Common myeloid progenitor, CD34-positive (primary cell): ENCODE measurements at regions of chr16 and their contacts with region 1.

Region 1: GRCh38 chr16:3059000-3059722 is 6.3 kb upstream of the IL32 start:
- DNase-seq: peak; percentile 75 to 83 (median 78)
- H3K4me3 ChIP-seq: peak overlapping the region; percentile 64 to 90 (median 76)
- H3K27ac ChIP-seq: peak overlapping the region in 1 of 2 experiments; percentile 61
- H3K4me1 ChIP-seq: peaks cover 0 to 57% (median 48%) of the 10 kb centered on the region in 4 experiments
- H3K27me3 ChIP-seq: peaks cover 0 to 6% (median 0%) of the 10 kb centered on the region in 5 experiments

Region 2: DNA sequence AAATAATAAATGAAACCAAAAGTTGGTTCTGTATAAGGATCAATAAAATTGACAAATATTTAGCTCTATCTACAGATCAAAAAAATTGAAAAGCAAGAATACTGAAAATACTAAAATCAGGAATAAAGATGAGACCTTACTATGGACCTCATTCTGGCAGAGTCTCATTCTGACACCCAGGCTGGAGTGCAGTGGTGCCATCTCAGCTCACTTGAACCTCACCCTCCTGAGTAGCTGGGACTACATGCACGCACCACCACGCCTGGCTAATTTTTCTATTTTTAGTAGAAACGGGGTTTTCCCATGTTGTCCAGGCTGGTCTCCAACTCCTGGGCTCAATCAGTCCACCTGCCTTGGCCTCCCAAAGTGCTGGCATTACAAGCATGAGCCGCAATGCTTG is 117.1 kb before region 1 on chr16:
- CTCF ChIA-PET with region 1: no interaction called
- POLR2A ChIA-PET with region 1: no interaction called
- DNase-seq: no peak
- H3K4me3 ChIP-seq: no peak overlapping the region
- H3K27ac ChIP-seq: no peak overlapping the region
- H3K4me1 ChIP-seq: no peaks in the 10 kb centered on the region
- H3K27me3 ChIP-seq: no peaks in the 10 kb centered on the region

Region 3: DNA sequence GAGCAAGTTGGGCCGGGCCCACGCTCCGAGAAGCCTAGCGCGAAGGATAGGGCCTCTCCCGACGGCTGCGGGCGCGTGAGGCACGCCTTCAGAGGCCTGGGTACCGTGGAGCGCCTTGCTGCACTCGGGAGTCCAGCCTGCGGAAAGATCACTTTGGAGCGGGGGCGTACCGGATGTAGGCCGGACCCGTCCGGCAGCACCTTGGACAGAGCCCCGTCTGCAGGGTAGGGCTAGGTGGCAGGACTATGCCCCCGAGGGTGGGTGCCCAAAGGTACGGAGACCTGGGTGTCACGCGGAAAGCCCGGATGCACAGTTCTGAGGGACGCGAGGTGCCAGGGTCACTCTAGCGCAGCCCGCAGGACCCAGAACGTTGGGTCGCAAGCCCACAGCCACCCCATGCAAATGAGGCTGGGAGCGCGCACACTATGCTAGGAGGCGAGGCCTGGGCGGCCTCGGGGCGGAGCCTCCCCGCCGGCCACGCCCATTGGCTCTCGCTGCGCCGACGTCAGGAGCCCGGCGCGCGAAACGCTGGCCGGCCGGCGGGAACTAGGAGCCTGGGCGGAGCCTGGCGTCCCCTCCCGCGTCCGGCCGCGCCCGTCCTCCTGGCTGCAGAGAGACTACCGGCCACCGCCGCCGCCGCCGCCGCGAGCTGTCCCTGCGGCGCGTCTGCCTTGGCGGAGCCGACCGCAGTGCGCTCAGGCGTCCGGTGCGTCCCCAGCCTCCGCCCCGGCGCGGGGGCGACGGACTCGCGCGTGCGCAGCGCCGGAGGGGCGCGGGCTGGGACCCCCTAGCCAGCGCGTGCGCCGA is 90.2 kb before region 1 on chr16 and contains the start of gene PAQR4:
- CTCF ChIA-PET with region 1: no interaction called
- POLR2A ChIA-PET with region 1: no interaction called
- DNase-seq: peak; percentile 68 to 81 (median 78)
- H3K4me3 ChIP-seq: peak within 1 kb of the TSS; percentile 71 to 87 (median 82)
- H3K27ac ChIP-seq: no peak within 1 kb of the TSS
- H3K4me1 ChIP-seq: peaks cover 0 to 60% (median 51%) of the 10 kb centered on the region in 4 experiments
- H3K27me3 ChIP-seq: peaks cover 0 to 47% (median 19%) of the 10 kb centered on the region in 5 experiments

Region 4: DNA sequence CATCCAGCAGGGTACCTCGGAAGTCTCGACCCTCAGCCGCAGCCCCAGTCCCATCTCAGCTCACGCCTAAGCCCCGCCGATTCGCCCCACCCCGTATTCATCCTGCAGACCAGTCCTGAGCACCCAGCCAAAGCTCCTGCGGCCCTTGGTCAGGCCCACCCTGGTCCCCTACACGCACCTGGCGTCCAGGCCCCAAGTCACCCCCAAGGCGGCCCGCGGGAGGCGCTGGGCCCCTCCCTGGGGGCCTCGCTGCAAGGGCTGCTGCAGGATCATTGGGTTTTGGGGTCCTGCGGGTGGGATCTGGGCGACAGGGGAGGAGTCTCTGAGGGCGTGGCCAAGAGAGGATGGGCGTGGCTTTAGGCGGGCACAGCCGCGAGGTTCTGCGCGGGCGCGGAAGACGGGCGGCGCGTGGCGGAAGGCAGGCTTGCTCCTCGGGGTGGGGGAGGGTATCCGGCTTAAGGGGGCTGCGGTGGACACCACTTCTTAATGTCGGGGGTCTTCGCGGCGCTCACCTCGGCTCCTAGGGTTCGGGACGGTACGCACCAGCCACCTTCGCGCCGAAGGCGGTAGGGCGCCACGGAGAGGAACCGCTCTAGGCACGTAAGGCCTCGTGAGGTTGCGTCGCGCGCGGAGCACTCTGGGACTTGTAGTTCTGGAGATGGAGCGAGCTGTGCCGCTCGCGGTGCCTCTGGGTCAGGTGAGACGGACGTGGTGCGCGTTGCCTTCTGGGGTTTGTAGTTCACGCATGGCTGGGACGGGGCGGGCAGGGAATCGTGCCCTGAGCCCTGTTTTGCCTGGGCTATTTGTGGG is 35.3 kb before region 1 on chr16 and contains the starts of genes HCFC1R1 and THOC6:
- CTCF ChIA-PET with region 1: interaction called, 30 read pairs
- POLR2A ChIA-PET with region 1: no interaction called
- DNase-seq: peak; percentile 98
- H3K4me3 ChIP-seq: peak within 1 kb of the TSS; percentile 16 to 82 (median 77)
- H3K27ac ChIP-seq: peak within 1 kb of the TSS; percentile 81 to 90
- H3K4me1 ChIP-seq: peaks cover 0 to 61% (median 57%) of the 10 kb centered on the region in 4 experiments
- H3K27me3 ChIP-seq: peaks cover 0 to 6% (median 4%) of the 10 kb centered on the region in 5 experiments

Region 5: DNA sequence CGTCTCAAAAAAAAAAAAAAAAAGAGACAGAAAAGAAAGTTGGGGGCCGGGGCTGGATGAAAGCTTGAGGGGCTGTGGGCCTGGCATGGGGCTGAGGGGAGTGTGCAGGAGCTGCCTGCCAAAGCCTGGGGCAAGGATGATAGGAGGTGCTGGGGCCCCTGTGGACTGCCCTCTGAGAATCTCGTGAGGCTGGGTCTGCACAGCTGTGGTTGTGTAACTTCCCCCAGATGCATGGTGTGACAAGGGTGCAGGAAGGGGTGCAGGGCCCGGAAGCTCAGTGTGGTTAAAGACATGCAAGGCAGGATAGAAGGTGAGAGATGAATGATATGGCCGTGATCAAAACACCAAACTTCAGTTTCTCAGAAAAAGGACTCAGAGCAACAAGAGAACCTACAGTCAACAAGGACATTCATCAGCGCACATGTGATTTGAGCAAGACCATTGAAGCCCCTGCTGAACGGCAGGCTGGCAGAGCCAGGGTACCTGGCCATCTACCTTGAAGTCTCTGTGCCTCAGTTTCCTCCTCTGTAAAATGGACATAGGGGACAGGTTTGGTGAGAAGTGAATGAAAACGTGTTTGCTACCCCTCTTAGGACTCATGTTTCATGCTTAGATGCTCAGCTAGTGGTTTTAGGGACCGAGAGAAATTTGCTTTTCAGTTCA is 15.8 kb after region 1 on chr16:
- CTCF ChIA-PET with region 1: interaction called, 31 read pairs
- POLR2A ChIA-PET with region 1: no interaction called
- DNase-seq: peak; percentile 82 to 98 (median 94)
- H3K4me3 ChIP-seq: peak overlapping the region in 5 of 7 experiments; percentile 9 to 53 (median 15)
- H3K27ac ChIP-seq: peak overlapping the region; percentile 56 to 64
- H3K4me1 ChIP-seq: peaks cover 0 to 63% (median 43%) of the 10 kb centered on the region in 4 experiments
- H3K27me3 ChIP-seq: no peaks in the 10 kb centered on the region

Region 6: DNA sequence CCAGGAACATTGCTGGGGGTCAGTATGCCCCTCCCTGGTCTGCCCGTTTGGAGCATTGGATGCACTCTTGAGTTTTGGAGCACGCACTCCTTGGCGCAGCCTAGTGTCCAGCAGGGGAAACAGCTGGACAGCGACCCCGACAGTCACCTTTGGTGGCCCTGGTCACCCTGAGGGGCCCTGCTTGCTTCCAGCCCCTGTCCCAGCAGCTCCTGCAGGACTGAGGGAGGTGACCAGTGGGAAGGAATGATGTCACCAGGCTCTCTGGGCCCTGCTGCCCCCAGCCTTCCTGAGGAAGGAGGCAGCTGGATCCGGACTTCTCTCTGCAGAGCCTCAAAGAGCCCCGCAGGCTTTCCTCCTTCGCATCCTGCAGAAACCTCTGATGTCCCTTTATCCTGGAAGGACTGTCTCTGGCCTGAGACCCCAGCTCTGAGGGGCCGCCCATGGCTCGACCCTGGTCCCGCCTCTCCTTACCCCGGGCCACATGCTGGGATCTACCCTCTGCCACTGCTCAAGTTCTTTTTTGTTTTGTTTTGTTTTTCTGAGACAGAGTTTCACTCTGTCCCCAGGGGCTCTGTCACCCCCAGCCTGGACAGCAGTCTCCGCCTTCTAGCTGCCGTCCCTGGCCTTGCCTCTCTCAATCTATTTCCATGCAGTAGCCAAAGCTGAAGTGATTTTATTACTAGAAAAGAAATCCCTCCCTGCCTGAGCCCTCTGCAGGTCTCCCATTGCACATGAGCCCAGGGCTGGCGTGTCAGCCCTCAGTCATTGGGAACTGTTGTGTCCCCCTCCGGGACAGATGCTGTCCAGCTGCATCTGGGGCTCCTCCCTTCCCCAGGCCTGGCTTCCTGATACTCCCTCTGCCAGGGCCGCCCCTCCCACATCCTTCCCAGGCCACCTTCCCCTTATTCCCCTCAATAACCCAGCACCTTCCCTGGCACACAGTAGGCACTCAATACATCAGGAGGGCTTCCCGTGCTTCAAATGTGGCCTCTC is 28.4 kb after region 1 on chr16:
- CTCF ChIA-PET with region 1: interaction called, 16 read pairs
- POLR2A ChIA-PET with region 1: no interaction called
- DNase-seq: peak in 2 of 3 donors; percentile 26 to 47
- H3K4me3 ChIP-seq: peak overlapping the region in 5 of 7 experiments; percentile 25 to 62 (median 47)
- H3K27ac ChIP-seq: no peak overlapping the region
- H3K4me1 ChIP-seq: peaks cover 9 to 62% (median 41%) of the 10 kb centered on the region in 4 experiments
- H3K27me3 ChIP-seq: no peaks in the 10 kb centered on the region

Region 7: DNA sequence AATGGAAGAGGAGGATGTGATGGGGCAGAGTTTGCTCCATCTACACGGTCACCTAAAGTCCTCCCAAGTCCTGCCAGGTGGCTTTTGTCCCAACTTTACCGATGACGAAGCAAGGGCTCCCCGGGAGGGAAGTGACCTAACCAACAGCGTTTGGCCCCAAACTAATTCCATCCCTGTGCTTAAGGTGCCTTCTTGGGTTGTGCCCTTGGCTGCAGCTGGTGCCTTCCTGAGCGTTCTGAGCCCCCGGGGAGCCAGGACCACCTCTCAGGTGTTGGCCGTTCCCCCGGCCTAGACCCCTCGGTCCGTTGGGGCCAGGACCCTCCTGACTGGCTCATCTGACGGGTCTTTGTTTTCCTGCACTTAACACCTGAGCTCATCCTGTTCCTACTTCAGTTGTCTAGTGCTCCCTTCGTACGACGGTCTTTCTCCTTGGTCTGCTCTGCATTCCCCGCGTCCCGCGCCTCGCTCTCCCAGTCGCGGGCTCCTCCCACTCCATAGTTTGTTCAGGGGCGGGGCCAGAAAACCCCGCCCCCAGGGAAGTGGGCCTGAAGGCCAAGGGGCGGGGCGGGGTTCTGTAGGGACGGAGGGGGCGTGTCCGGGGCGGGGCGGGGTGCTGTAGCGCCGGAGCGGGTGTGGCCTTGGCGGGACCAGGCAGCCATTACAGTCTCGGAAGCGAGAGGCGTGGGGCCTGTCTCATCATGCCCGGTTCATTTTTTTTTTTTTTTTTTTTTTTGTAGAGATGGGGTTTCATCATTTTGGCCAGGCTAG is 40.8 kb after region 1 on chr16:
- CTCF ChIA-PET with region 1: interaction called, 51 read pairs
- POLR2A ChIA-PET with region 1: no interaction called
- DNase-seq: peak; percentile 90 to 93 (median 92)
- H3K4me3 ChIP-seq: peak overlapping the region in 6 of 7 experiments; percentile 9 to 59 (median 41)
- H3K27ac ChIP-seq: no peak overlapping the region
- H3K4me1 ChIP-seq: peaks cover 10 to 41% (median 35%) of the 10 kb centered on the region in 4 experiments
- H3K27me3 ChIP-seq: no peaks in the 10 kb centered on the region

Region 8: DNA sequence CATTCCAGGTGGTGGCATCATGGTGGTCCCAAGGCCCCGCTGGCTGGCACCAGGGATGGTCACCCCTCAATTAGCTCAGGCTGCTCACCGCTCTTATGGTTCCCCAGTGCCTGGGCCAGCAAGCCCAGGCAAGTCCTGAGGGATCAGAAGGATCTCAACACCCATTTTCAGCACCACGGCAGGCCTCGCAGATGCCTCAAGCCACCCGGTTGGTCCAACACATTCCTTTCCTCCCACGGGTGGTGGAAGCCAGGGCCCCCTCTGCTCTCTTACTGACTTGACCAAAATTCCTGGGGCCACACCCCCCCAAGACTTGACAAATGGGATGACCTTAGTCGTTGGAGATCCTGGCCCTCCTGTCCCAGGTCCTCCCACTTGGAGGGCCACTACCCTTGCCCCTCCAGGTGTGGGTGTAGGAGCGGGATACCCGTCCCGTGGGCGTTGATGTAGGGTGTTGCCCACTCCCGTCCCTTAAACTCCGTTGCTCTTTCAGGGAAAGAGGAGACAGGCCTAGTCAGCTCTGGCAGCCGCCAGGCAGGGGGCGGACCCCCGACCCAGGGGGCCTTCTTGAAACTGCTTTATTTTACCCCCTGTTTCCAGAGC is 59.1 kb after region 1 on chr16:
- CTCF ChIA-PET with region 1: interaction called, 10 read pairs
- POLR2A ChIA-PET with region 1: interaction called, 3 read pairs
- DNase-seq: no peak
- H3K4me3 ChIP-seq: no peak overlapping the region
- H3K27ac ChIP-seq: no peak overlapping the region
- H3K4me1 ChIP-seq: peaks cover 0 to 5% (median 3%) of the 10 kb centered on the region in 4 experiments
- H3K27me3 ChIP-seq: peaks cover 0 to 2% (median 0%) of the 10 kb centered on the region in 5 experiments

Region 9: DNA sequence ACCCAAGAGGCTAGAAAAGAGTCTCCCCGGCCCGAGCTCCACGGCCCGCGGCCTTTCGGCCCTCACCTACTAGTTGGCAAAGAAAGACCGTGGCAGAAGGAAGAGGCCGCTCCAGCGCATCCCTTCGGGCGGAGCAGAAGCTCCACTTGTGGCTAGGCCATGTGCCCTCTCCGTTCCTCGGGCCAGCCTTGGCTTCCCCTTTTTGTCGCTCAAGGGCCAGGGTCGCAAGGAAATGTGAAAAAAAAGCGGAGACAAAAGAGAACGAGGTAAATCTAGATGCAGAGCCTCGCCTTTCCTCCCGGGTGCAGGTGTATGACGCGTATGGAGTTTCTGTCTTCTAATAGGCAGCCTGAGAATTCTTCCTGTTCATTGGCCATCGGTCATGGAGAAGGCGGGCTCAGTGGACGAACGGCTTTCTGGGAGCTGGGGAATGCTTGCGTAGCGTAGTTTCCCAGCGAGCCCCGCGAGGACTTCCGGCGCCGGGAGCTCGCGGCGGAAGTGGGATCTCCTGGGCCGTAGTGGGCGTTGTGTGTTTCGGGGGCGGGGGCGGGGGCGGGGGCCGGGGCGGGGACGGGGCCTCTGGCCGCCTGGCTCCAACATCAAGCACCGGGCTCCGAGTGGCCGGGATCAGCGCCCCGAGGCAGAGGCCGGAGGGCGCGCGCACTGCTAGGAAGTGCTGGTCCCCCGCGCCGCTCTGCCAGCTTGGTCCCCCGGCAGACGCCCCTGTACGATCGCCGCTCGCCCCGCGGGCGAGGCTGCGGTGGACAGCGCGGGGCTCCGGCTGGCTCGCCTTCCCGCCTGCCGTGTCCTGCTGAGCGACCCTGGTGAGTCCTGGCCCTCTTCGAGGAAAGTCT is 75.6 kb after region 1 on chr16 and contains the start of gene ZNF213:
- CTCF ChIA-PET with region 1: interaction called, 82 read pairs
- POLR2A ChIA-PET with region 1: no interaction called
- DNase-seq: peak; percentile 98 to 99 (median 99)
- H3K4me3 ChIP-seq: peak within 1 kb of the TSS; percentile 56 to 99 (median 98)
- H3K27ac ChIP-seq: peak within 1 kb of the TSS; percentile 91 to 96
- H3K4me1 ChIP-seq: peaks cover 4 to 27% (median 17%) of the 10 kb centered on the region in 4 experiments
- H3K27me3 ChIP-seq: no peaks in the 10 kb centered on the region